ENCODE measurements at regions of chr5 and their contacts with region 1.

Region 1: DNA sequence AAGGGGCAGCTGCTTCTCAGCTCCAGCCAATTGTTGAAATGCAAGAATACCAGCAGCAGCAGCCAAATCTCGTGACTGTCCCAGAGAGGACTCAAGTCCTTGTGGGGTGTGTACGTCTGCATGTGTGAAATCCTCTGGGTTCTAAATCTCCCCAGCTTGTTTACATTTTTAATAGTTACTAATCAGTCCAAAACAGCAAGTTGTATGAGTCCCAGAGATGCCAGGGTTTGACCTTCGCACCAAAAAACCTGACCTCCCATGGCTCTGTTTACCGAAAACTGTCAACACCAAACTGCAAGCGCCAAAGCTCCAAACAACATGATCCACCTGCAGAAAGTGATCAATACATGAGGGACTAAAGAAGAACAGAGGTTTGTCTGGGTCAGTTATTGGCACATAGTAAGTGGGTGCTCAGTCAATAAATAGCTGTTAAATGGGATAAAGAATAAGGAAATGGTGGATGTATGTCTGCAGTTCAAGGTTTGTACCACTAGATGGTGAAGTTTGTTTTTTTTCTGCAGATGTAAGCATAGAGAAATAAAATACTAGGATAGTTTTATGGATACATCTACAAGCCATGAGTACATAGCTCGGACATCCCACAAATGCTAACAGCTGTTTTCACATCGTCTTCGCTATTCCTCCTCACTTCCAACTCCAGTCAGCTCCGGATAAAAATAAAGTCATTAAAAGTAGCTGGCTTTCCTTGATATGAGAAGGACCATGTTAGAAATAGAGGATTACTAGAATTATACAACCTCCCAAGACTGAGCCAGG is 85.3 kb upstream of the ADRB2 start:
- DNase-seq: peak; percentile 96
- ATAC-seq: peak; percentile 92
- H3K4me3 ChIP-seq: peak overlapping the region; percentile 4; the same call in 1 of the 2 replicates
- H3K27ac ChIP-seq: no peak overlapping the region
- H3K4me1 ChIP-seq: peaks cover 5% of the 10 kb centered on the region
- H3K27me3 ChIP-seq: no peaks in the 10 kb centered on the region
- CTCF ChIP-seq: peak; percentile 99

Region 2: GRCh38 chr5:147673266-147673665 is 1067.9 kb before region 1 on chr5:
- CTCF ChIA-PET with region 1: no interaction called
- POLR2A ChIA-PET with region 1: no interaction called
- intact Hi-C with region 1: no loop called
- DNase-seq: no peak
- ATAC-seq: no peak
- H3K4me3 ChIP-seq: no peak overlapping the region
- H3K27ac ChIP-seq: no peak overlapping the region
- H3K4me1 ChIP-seq: no peaks in the 10 kb centered on the region
- H3K27me3 ChIP-seq: peaks cover 15% of the 10 kb centered on the region
- CTCF ChIP-seq: no peak

Region 3: GRCh38 chr5:148632255-148633066 is 108.7 kb before region 1 on chr5:
- CTCF ChIA-PET with region 1: no interaction called
- POLR2A ChIA-PET with region 1: no interaction called
- intact Hi-C with region 1: no loop called
- DNase-seq: no peak
- ATAC-seq: no peak
- H3K4me3 ChIP-seq: no peak overlapping the region
- H3K27ac ChIP-seq: no peak overlapping the region
- H3K4me1 ChIP-seq: no peaks in the 10 kb centered on the region
- H3K27me3 ChIP-seq: peaks cover 68% of the 10 kb centered on the region
- CTCF ChIP-seq: no peak

Region 4: DNA sequence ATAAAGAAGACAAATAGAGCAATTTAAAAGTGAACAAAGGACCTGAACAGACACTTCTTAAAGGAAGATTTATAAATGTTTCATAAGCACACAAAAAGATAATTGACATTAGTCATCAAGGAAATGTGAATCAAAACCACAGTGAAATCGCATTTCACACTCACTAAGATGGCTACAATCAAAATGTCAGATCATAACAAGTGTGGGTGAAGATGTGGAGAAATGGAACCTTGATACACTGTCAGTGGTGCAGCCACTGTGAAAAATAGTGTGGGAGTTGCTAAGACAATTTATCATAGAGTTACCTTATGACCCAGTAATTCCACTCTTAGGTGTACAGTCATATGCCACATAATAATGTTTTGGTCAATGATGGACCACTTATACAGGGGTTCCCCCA is 32.3 kb before region 1 on chr5:
- CTCF ChIA-PET with region 1: no interaction called
- POLR2A ChIA-PET with region 1: no interaction called
- intact Hi-C with region 1: no loop called
- DNase-seq: peak; percentile 44
- ATAC-seq: peak; percentile 63
- H3K4me3 ChIP-seq: no peak overlapping the region
- H3K27ac ChIP-seq: no peak overlapping the region
- H3K4me1 ChIP-seq: peaks cover 6% of the 10 kb centered on the region; the same call in 1 of the 2 replicates
- H3K27me3 ChIP-seq: peaks cover 7% of the 10 kb centered on the region; the same call in 1 of the 2 replicates
- CTCF ChIP-seq: no peak

Region 5: GRCh38 chr5:148791334-148791667 is 50.1 kb after region 1 on chr5:
- CTCF ChIA-PET with region 1: interaction called, 11 read pairs
- POLR2A ChIA-PET with region 1: interaction called, 4 read pairs
- intact Hi-C with region 1: no loop called
- DNase-seq: peak; percentile 95
- ATAC-seq: peak; percentile 62
- H3K4me3 ChIP-seq: peak overlapping the region; percentile 22; the same call in 1 of the 2 replicates
- H3K27ac ChIP-seq: peak overlapping the region; percentile 93
- H3K4me1 ChIP-seq: peaks cover 76% of the 10 kb centered on the region
- H3K27me3 ChIP-seq: no peaks in the 10 kb centered on the region
- CTCF ChIP-seq: no peak

Region 6: GRCh38 chr5:148820461-148821395 is 79.6 kb after region 1 on chr5:
- CTCF ChIA-PET with region 1: interaction called, 13 read pairs
- POLR2A ChIA-PET with region 1: interaction called, 21 read pairs
- intact Hi-C with region 1: loop called (anchors 1 kb)
- DNase-seq: peak; percentile 84
- ATAC-seq: peak; percentile 56
- H3K4me3 ChIP-seq: no peak overlapping the region
- H3K27ac ChIP-seq: no peak overlapping the region
- H3K4me1 ChIP-seq: peaks cover 11% of the 10 kb centered on the region
- H3K27me3 ChIP-seq: no peaks in the 10 kb centered on the region
- CTCF ChIP-seq: peak; percentile 98

Region 7: GRCh38 chr5:148912714-148913398 is 171.7 kb after region 1 on chr5:
- CTCF ChIA-PET with region 1: interaction called, 14 read pairs
- POLR2A ChIA-PET with region 1: no interaction called
- intact Hi-C with region 1: loop called (anchors 1 kb)
- DNase-seq: peak; percentile 100
- ATAC-seq: peak; percentile 62
- H3K4me3 ChIP-seq: peak overlapping the region; percentile 19; the same call in 1 of the 2 replicates
- H3K27ac ChIP-seq: peak overlapping the region; percentile 88
- H3K4me1 ChIP-seq: peaks cover 80% of the 10 kb centered on the region
- H3K27me3 ChIP-seq: no peaks in the 10 kb centered on the region
- CTCF ChIP-seq: peak; percentile 97

Region 8: DNA sequence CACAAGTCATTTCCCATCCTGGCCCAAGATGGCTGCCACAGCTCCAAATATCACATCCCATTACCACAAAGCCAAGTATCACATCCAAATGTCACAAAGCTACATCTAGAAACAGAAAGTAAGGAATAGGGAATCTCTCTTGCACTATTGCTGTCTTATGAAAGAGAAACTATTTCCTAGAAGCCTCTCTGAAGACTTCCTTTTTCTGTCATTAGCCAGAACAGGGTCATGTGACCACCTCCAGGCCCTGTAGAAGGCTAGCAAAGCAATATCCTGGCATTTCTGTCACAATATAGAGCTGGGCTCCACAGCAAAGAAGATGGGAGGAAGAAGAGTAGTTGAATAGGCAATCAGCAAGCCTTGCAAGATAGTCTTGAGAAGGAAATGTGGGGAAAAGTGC is 222.5 kb after region 1 on chr5:
- CTCF ChIA-PET with region 1: interaction called, 31 read pairs
- POLR2A ChIA-PET with region 1: interaction called, 3 read pairs
- intact Hi-C with region 1: no loop called
- DNase-seq: no peak
- ATAC-seq: no peak
- H3K4me3 ChIP-seq: no peak overlapping the region
- H3K27ac ChIP-seq: peak overlapping the region; percentile 79; the same call in 1 of the 2 replicates
- H3K4me1 ChIP-seq: peaks cover 81% of the 10 kb centered on the region
- H3K27me3 ChIP-seq: no peaks in the 10 kb centered on the region
- CTCF ChIP-seq: no peak

Measured in PC-3 (cell line).